A673 (cell line): ENCODE measurements at regions of chr20 and their contacts with region 1.

Region 1: DNA sequence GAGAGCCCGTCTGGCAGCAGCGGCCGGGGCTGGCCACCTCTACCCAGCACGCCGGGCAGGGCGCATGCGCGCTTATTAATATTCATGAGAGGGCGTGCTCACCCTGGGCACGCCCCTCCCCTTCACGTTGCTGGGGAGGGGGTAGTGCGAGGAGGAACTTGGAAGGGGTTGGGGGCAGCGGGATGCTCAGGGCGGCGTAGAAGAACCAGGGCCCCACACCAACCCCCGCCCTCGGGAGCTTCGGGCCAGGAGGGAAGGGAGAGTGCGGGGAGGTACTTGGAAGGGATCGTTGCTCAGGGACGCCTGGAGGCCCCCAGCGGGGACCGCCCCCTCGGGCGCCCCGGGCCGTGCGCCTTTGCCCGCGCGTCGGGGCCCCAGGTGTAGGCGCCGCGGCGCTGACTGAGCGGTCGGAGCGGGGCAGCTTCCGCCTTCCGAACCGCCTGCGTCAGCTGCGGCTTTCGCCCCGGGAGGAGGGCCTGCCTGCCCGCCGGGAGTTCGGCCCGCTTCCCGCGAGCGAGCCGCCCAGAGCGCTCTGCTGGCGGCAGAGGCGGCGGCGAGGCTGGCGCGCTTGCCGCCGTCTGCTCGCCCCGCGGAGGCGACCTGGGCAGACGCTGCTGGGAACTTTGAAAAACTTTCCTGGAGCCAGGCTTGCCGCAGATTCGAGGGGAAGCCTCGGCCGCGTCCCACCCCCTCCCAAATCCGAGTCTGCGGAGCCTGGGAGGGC is at the start of gene JAG1:
- DNase-seq: peak; percentile 94
- H3K4me3 ChIP-seq: peak within 1 kb of the TSS; percentile 59
- H3K27ac ChIP-seq: peak within 1 kb of the TSS; percentile 75
- H3K4me1 ChIP-seq: peaks cover 33% of the 10 kb centered on the region
- H3K27me3 ChIP-seq: no peaks in the 10 kb centered on the region
- CTCF ChIP-seq: no peak
- total RNA-seq, gene JAG1: 42.9 and 57.5 TPM in 2 replicates

Region 2: DNA sequence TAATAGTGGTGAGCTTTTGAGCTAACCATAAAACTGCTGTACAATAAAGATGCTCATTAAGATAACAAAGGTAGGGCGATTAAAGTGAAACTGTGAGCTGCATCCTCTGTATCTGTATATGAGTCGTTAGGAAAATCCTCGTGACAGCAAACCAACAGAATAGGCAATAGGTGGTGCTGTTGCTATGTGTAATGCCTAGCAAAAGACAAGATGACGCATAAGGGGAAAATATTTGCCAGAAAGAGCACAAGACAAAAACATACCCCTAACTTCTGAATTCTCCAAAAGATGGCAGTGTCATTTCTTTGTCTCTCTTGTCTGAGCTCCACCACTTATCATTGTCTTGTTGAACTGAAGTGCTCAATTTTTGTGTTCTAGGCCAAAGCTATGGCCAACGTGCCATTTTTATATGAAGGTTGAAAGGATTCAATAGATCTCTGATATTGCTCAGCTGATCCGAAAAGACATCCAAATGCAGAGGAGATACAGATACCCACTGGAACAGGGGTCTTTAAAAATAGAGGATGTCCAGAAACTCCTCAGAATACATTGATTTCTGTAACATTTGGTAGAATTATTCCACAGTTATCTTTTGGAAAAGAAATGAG is 695.6 kb before region 1 on chr20:
- CTCF ChIA-PET with region 1: no interaction called
- POLR2A ChIA-PET with region 1: no interaction called
- intact Hi-C with region 1: loop called (anchors 2 kb)
- DNase-seq: peak; percentile 91
- H3K4me3 ChIP-seq: no peak overlapping the region
- H3K27ac ChIP-seq: no peak overlapping the region
- H3K4me1 ChIP-seq: peaks cover 9% of the 10 kb centered on the region
- H3K27me3 ChIP-seq: no peaks in the 10 kb centered on the region
- CTCF ChIP-seq: peak; percentile 93

Region 3: DNA sequence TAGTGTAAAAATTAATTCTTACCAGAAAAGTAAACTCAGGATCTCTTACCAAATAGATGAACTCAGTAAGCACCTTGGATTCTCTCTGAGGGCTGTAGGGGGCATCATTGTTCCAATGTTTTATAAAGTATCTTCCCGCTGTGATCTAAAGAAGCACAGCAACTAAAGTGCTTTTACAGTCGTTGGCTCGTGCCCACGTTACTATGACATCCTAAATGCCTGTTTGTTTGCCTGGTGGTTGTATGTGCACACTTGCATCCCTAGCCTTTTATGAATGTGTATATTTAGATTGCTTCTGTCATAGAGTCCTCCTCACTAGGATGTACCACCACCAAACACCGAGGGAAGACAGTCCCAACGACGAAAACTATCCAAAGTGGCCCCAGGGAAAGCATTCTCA is 204.6 kb before region 1 on chr20:
- CTCF ChIA-PET with region 1: interaction called, 3 read pairs
- POLR2A ChIA-PET with region 1: no interaction called
- intact Hi-C with region 1: loop called (anchors 5 kb)
- DNase-seq: peak; percentile 96
- H3K4me3 ChIP-seq: peak overlapping the region; percentile 8
- H3K27ac ChIP-seq: peak overlapping the region; percentile 66
- H3K4me1 ChIP-seq: peaks cover 67% of the 10 kb centered on the region
- H3K27me3 ChIP-seq: no peaks in the 10 kb centered on the region
- CTCF ChIP-seq: peak; percentile 80

Region 4: DNA sequence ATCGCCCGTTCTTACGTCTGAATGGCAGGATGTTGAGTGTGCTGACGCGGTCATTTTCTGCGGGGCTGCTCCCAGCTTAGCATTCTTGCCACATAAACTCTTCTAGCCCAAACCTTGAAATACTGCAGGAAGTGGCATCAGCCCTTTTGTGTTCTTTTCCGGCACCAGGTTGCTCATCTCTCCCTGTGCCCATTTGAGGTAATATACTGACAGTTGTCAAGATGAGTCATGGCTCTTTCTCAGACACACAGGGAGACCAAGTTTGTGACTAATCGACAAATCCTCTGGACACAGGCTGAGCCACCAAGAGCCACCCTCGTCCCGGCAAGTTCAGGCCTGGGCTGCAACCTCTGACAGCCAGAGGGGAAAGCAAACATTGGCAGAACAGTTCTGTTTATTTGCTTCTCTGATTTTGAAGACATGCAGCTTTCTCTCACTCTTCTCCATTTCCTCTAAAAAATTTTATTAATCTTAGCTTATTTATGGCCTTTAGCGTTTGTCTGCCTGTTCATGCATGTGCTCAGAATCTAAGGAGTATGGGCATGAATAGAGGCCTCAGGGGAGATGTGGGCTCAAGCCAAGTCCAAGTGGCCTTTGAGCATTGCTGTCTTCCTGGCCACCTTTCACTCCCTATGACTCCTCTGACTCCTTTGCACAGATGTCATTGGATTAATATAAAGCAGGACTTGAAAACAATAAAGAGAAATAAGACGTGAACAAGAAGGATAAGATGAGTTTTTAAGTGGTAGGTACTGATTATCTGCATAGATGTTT is 327.8 kb after region 1 on chr20:
- CTCF ChIA-PET with region 1: no interaction called
- POLR2A ChIA-PET with region 1: interaction called, 3 read pairs
- intact Hi-C with region 1: loop called (anchors 5 kb)
- DNase-seq: peak; percentile 74
- H3K4me3 ChIP-seq: no peak overlapping the region
- H3K27ac ChIP-seq: no peak overlapping the region
- H3K4me1 ChIP-seq: no peaks in the 10 kb centered on the region
- H3K27me3 ChIP-seq: no peaks in the 10 kb centered on the region
- CTCF ChIP-seq: no peak

Region 5: GRCh38 chr20:11204926-11205768 is 531.0 kb after region 1 on chr20:
- CTCF ChIA-PET with region 1: no interaction called
- POLR2A ChIA-PET with region 1: no interaction called
- intact Hi-C with region 1: loop called (anchors 5 kb)
- DNase-seq: peak; percentile 68
- H3K4me3 ChIP-seq: no peak overlapping the region
- H3K27ac ChIP-seq: peak overlapping the region; percentile 5
- H3K4me1 ChIP-seq: peaks cover 10% of the 10 kb centered on the region
- H3K27me3 ChIP-seq: no peaks in the 10 kb centered on the region
- CTCF ChIP-seq: peak; percentile 90

Region 6: DNA sequence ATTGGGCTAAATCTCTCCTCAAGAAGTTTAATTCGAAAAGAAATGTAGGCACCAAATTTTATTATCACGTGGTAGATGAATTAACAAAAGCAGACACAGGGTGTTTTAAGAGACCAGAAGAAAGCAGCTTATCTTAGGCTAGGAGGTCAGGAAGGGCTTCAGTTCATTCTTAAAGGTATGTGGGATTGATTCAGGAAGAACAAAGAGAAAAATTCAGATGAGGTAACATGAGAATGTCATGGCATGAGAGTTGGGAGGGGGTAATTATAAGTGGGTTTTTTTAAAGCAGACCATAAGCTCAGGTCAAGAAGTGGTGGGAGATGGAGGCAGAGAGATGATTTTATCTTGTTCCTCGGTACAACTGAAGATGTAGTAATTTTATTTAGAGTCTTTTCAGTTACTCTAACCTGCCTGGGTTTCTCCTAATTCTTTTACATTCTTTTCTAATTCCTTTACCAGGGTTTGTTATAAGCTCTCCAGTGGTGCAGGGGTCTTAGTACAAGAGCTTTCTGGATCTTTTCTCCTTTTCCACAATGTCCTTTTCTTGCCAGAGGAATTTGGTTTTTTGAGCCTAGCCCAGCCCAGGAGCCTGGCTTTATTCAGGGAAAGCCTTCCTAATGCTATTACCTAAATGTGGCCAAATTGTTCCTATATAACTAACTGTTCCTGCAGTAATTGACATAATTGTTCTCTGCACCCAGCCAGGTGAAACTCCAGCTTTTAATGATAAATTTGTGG is 769.4 kb after region 1 on chr20:
- CTCF ChIA-PET with region 1: no interaction called
- POLR2A ChIA-PET with region 1: no interaction called
- intact Hi-C with region 1: loop called (anchors 5 kb)
- DNase-seq: no peak
- H3K4me3 ChIP-seq: no peak overlapping the region
- H3K27ac ChIP-seq: no peak overlapping the region
- H3K4me1 ChIP-seq: peaks cover 32% of the 10 kb centered on the region
- H3K27me3 ChIP-seq: no peaks in the 10 kb centered on the region
- CTCF ChIP-seq: no peak